ENCODE measurements at regions of chr2 and their contacts with region 1.

Region 1: GRCh38 chr2:42095923-42096408 is 48.1 kb downstream of the PKDCC start:
- DNase-seq: peak; percentile 84
- H3K4me3 ChIP-seq: no peak overlapping the region
- H3K27ac ChIP-seq: no peak overlapping the region
- H3K4me1 ChIP-seq: no peaks in the 10 kb centered on the region
- H3K27me3 ChIP-seq: no peaks in the 10 kb centered on the region

Region 2: DNA sequence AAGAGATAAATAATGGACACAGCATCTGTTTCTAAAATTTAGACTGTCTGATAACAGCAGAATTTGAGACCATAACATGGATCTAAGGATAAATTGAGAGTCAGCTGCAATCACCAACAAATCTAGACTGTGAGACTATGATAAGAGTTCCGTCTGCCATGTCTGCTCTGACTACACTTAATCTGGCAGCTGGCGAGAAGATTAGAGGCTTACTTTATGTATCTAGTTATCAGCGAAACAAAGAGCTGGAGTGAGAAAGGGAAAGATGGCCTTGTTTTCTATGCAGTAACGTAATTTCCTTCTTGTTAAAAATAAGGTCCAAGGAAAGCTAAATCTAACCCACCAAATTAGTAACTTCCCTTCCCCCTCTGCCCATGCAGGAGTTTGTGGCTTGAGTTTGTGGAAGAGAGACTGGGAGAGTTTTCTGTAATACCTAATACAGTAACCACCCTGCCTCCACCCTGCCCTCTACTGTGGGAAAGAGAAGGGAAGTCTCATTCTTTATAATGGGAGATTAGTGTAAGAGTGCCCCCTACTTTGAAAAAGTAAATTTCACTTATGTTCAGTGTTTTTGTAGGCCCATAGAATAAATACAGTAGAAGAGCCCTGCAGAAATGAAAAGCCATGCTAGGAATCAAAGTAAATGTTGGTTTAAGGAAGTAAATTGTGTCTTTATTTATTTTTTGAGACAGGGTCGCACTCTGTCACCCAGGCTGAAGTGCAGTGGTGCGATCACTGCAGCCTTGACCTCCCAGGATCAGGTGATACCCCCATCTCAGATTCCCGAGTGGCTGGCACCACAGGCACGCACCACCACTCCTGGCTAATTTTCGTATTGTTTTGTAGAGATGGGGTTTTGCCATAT is 100.7 kb after region 1 on chr2:
- in situ Hi-C with region 1: loop called (anchors 10 kb)
- DNase-seq: peak; percentile 52
- H3K4me3 ChIP-seq: no peak overlapping the region
- H3K27ac ChIP-seq: no peak overlapping the region
- H3K4me1 ChIP-seq: peaks cover 43% of the 10 kb centered on the region
- H3K27me3 ChIP-seq: no peaks in the 10 kb centered on the region

Region 3: DNA sequence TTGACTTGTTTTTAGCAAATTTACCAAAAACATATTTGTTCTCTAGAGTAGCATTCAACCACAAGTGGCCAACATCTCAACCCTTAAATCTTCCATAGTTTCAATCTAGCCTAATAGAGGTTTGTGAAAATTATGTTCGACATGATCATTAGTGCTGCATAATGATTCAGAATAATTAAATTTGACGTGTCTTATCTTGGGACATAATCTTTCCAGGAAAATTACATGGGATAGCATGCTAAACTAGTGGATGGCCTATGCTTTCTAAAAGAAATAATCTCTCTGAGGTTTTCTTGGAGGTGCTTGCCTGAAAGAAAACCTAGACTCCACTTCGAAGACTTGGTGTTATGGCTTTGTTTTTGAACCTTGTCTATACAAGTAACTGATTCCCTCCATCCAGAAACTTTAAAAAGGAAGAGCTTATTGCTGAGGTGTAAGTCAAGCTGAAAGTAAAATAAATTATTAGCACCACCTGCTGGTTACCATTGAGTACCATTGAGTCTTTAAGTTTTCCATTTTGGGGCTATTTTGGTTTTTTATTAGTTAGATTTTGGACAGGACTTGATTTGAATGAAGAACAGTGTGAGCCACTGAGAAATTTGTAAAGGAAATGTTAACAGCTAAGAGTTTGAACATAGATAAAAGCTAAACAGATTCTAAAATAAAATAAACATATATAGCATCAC is 232.3 kb after region 1 on chr2:
- in situ Hi-C with region 1: loop called (anchors 10 kb)
- DNase-seq: peak; percentile 60
- H3K4me3 ChIP-seq: no peak overlapping the region
- H3K27ac ChIP-seq: no peak overlapping the region
- H3K4me1 ChIP-seq: peaks cover 17% of the 10 kb centered on the region; the same call in 1 of the 2 replicates
- H3K27me3 ChIP-seq: no peaks in the 10 kb centered on the region